HCT116 (cell line): ENCODE measurements at regions of chr19 and their contacts with region 1.

Region 1: DNA sequence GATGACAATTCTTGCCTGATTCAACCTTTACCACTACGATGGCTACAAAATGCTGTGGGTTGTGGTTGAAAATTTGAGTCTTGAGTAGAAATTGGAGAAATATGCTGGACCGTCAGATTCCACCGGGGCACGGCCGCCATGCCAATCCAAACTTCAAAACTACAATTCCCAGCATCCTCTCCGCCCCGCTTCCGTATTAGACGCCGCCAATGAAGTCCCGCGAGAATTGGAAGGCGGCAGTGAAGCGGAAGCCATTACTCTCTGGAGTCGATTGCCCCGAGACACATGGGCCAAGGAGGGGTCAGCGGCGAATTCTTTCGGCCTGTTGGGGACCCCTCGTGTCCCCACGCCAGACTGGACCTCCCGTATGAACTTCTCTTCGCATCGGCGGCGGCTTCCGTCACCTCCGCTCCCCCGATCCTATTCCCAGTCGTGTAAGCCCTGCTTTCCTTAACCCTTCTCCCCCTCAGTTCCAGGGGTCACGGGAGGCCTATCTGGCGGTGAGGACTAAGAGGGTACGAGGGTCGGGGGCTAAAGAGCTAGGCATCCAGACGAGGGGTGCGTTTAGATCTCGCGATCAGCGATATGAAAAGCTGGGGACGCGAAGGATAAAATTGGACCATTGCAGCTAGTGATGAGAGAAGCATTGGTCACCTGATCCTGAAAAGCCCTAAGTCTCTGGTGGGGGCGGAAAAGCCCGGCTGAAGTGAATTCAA is at the start of gene ZNF317:
- DNase-seq: peak; percentile 84
- ATAC-seq: peak; percentile 88
- H3K4me3 ChIP-seq: peak within 1 kb of the TSS; percentile 90 to 99
- H3K27ac ChIP-seq: peak within 1 kb of the TSS; percentile 54
- H3K4me1 ChIP-seq: peaks cover 4 to 9% of the 10 kb centered on the region in 2 experiments; a peak in 2 of 4 replicates
- H3K27me3 ChIP-seq: no peaks in the 10 kb centered on the region
- CTCF ChIP-seq: no peak
- POLR2A ChIP-seq: peak; percentile 64
- RAD21 ChIP-seq: no peak
- total RNA-seq, gene ZNF317: 39.8 TPM

Region 2: DNA sequence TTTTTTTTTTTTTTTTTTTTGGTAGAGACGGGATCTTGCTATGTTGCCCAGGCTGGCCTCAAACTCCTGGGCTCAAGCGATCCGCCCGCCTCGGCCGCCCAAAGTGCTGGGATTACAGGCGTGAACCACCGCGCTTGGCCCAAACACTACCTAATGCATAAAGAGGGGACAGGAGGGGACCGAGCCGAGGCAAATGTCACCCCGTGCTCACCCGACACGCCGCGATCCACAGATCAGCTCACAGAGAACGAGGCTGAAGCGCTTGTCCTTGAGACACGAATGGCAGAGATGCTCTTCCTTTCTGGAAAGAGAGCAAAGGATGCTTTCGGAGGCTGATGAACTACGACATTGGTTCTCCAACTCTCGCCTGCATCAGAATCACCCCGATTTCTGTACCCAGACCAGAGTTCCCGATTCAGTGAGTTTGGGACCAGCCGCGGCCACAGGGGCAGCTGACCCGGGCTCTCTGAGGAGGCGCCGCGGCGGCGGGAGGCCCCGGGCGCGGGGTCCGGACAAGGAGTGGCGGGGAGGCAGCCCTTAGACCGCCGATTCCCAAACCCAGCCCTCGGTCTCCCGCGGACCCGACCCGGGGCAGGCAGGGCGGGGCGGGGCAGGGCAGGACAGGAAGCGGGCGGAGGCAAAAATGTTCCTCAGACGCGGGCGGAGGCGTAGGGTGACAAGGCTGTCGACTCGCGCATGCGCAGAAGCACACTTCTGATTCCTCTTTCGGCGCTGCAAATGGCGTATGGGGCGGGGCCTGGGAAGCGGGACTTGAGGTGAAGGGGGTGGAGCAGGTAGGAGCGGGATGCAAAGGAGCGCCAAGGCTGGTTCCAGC is 169.0 kb after region 1 on chr19 and contains the start of gene ZNF699:
- CTCF ChIA-PET with region 1: no interaction called
- POLR2A ChIA-PET with region 1: no interaction called
- RAD21 ChIA-PET with region 1: no interaction called
- intact Hi-C with region 1: loop called (anchors 5 kb)
- DNase-seq: peak; percentile 96
- ATAC-seq: peak; percentile 88
- H3K4me3 ChIP-seq: peak within 1 kb of the TSS; percentile 91 to 95
- H3K27ac ChIP-seq: peak within 1 kb of the TSS; percentile 79
- H3K4me1 ChIP-seq: peaks cover 0 to 9% of the 10 kb centered on the region in 2 experiments; a peak in 2 of 4 replicates
- H3K27me3 ChIP-seq: no peaks in the 10 kb centered on the region
- CTCF ChIP-seq: no peak
- POLR2A ChIP-seq: no peak
- RAD21 ChIP-seq: no peak
- total RNA-seq, gene ZNF699: 7.8 TPM

Region 3: DNA sequence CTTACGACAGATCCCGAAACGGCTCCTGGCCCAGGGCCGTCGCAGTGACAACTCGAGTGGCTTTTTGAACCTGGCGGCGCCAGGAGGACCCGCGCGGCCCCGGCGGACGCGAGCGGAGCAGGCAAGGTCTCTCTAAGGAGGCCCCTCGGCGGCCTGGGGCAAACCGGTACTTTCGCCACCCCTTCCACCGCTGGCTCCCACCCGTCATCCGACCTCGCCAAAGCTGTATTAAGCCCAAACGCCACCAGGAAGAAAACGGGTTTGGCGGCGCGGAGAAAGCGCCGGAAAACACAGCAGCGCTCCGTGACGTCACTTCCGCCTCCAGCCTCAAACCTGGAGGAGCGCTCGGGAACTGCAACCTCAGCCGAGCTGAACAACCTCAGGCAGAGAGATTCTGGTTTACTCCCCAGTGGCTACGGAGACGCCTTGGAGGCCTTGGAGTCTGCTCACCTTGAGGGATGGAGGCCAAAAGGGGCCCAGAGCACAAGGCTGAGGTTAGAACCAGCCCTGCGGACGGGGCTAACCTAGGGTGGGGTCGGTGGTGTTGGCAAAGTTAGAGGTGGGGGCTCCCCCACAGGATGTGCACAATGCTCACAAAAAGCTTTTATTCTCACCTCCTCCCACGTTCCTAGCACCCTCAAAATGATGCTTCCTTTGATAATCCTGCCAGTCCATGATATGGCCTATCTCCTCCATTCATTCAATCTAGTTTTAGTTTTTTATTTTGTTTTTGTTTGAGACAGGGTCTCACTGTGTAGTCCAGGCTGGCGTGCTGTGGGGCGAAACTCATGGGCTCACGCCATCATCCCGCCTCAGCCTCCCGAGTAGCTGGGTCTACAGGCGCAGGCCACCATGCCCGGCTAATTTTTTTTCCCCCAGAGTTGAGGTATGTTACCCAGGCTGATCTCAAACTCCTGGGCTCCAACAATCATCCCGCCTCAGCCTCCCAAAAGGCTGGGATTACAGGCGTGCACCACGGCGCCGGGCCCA is 295.3 kb after region 1 on chr19 and contains the start of gene ZNF266:
- CTCF ChIA-PET with region 1: no interaction called
- POLR2A ChIA-PET with region 1: no interaction called
- RAD21 ChIA-PET with region 1: no interaction called
- intact Hi-C with region 1: loop called (anchors 10 kb)
- DNase-seq: peak; percentile 87
- ATAC-seq: peak; percentile 91
- H3K4me3 ChIP-seq: peak within 1 kb of the TSS; percentile 75 to 77
- H3K27ac ChIP-seq: peak within 1 kb of the TSS; percentile 69
- H3K4me1 ChIP-seq: peaks cover 0 to 7% of the 10 kb centered on the region in 2 experiments; a peak in 2 of 4 replicates
- H3K27me3 ChIP-seq: no peaks in the 10 kb centered on the region
- CTCF ChIP-seq: peak in 2 of 3 experiments; percentile 59 to 70; a peak in 4 of 6 replicates
- POLR2A ChIP-seq: no peak
- RAD21 ChIP-seq: no peak
- total RNA-seq, gene ZNF266: 9.4 TPM

Region 4: GRCh38 chr19:9621156-9622037 is 481.1 kb after region 1 on chr19 and contains the start of gene ZNF561:
- CTCF ChIA-PET with region 1: no interaction called
- POLR2A ChIA-PET with region 1: no interaction called
- RAD21 ChIA-PET with region 1: no interaction called
- intact Hi-C with region 1: loop called (anchors 5 kb)
- DNase-seq: peak; percentile 81
- ATAC-seq: peak; percentile 86
- H3K4me3 ChIP-seq: peak within 1 kb of the TSS; percentile 92 to 97
- H3K27ac ChIP-seq: peak within 1 kb of the TSS; percentile 81
- H3K4me1 ChIP-seq: peaks cover 3 to 13% of the 10 kb centered on the region in 2 experiments; a peak in 3 of 4 replicates
- H3K27me3 ChIP-seq: no peaks in the 10 kb centered on the region
- CTCF ChIP-seq: no peak
- POLR2A ChIP-seq: peak; percentile 65
- RAD21 ChIP-seq: no peak; the same call in 1 of the 2 replicates
- total RNA-seq, gene ZNF561: 31.3 TPM

Region 5: GRCh38 chr19:9796113-9796773 is 655.9 kb after region 1 on chr19:
- CTCF ChIA-PET with region 1: no interaction called
- POLR2A ChIA-PET with region 1: no interaction called
- RAD21 ChIA-PET with region 1: no interaction called
- intact Hi-C with region 1: loop called (anchors 5 kb)
- DNase-seq: peak; percentile 90
- ATAC-seq: peak; percentile 100
- H3K4me3 ChIP-seq: no peak overlapping the region
- H3K27ac ChIP-seq: no peak overlapping the region
- H3K4me1 ChIP-seq: no peaks in the 10 kb centered on the region
- H3K27me3 ChIP-seq: no peaks in the 10 kb centered on the region
- CTCF ChIP-seq: peak; percentile 84 to 90 (median 89)
- POLR2A ChIP-seq: no peak
- RAD21 ChIP-seq: peak; percentile 97

Region 6: GRCh38 chr19:9847087-9847671 is 706.9 kb after region 1 on chr19:
- CTCF ChIA-PET with region 1: no interaction called
- POLR2A ChIA-PET with region 1: no interaction called
- RAD21 ChIA-PET with region 1: no interaction called
- intact Hi-C with region 1: loop called (anchors 5 kb)
- DNase-seq: peak; percentile 56
- ATAC-seq: peak; percentile 94
- H3K4me3 ChIP-seq: no peak overlapping the region
- H3K27ac ChIP-seq: peak overlapping the region; percentile 1; the same call in 1 of the 2 replicates
- H3K4me1 ChIP-seq: peaks cover 0 to 14% of the 10 kb centered on the region in 2 experiments; a peak in 2 of 4 replicates
- H3K27me3 ChIP-seq: no peaks in the 10 kb centered on the region
- CTCF ChIP-seq: peak; percentile 46 to 73 (median 72); a peak in 5 of 6 replicates
- POLR2A ChIP-seq: no peak
- RAD21 ChIP-seq: peak; percentile 71

Region 7: GRCh38 chr19:10388957-10389356 is 1248.6 kb after region 1 on chr19:
- CTCF ChIA-PET with region 1: no interaction called
- POLR2A ChIA-PET with region 1: no interaction called
- RAD21 ChIA-PET with region 1: no interaction called
- intact Hi-C with region 1: loop called (anchors 5 kb)
- DNase-seq: peak; percentile 77
- ATAC-seq: peak; percentile 67
- H3K4me3 ChIP-seq: no peak overlapping the region
- H3K27ac ChIP-seq: no peak overlapping the region
- H3K4me1 ChIP-seq: 0 out of 4 replicates have a peak, but pooled peaks cover 0 to 3% of the 10 kb centered on the region in 2 experiments
- H3K27me3 ChIP-seq: no peaks in the 10 kb centered on the region
- CTCF ChIP-seq: peak; percentile 92 to 97 (median 97)
- POLR2A ChIP-seq: no peak
- RAD21 ChIP-seq: peak; percentile 95